Adrenal gland (tissue), 19 donors: ENCODE measurements at regions of chr5 and their contacts with region 1.

Region 1: DNA sequence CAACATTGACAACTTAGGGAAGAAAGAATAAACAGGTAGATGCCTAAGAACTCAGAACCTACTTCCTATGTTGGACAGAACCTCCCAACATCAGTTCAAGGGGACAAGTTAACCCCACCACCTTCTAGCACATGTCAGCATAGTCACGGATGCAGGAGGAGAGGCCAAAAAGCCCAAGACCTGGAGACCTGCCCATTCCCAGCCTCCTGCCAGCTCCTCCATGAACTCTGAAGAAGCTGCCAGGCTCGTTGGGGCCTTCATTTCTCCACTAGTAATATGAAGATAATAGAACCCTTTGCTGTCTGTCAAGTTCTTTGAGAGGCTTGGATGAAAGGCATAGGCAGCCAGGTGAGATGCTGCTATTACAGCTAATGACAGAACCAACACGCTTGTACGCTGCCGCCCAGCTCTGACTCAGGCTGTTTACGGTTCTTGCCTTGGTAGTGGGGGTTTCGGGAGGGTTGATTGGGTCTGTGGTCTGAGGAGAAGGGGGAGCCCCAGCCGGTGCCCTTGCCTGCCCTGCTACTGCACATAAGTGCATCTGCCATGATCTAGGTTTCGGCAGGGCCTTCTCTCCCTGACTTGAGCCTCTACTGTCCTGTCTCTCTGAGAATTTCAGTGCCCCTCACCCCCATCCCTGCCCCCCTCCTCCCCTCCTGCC is 82.2 kb downstream of the NRG2 start:
- DNase-seq: peak in 1 of 7 donors; percentile 41
- H3K4me3 ChIP-seq: no peak overlapping the region
- H3K27ac ChIP-seq: no peak overlapping the region
- H3K4me1 ChIP-seq: no peaks in the 10 kb centered on the region
- H3K27me3 ChIP-seq: no peaks in the 10 kb centered on the region
- CTCF ChIP-seq: no peak
- POLR2A ChIP-seq: no peak

Region 2: DNA sequence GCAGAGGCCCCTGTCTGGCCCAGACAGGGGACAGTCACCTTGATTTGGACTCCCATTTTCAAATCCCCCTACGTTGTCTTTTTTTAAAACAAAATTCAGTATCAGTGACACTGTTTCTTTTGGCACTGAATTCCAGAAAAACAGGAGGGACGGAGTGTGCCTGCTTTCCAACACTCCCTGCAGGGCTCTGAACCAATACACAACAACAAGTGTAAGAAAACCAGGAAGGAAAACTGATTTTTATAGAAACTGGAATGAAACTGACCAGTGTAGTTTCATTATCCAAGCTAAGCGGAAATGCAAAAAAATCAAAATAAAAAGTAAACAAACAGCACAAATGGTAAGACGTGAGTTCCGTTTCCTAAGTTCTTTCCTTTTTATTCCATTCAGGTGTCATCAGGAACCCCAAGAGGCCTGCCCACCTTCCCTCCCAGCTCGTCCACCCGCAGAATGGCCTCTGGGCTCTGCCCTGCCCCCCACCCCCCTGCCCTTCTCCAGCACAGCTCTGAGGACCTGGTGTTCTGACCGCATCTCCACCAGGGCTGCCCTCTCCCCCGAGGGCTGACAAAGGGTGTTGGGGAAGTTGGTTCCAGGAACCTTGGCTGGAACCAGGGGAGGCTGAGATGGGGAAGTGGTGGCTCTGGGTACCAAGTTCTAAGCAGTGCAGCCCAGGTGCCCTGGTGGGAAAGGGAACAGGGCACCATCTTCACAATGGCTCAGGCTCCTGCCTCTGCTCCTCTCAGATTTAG is 91.6 kb before region 1 on chr5:
- intact Hi-C with region 1: loop called in 1 of 2 experiments (anchors 5 kb)
- DNase-seq: no peak
- H3K4me3 ChIP-seq: peak overlapping the region in 1 of 4 donors; percentile 32
- H3K27ac ChIP-seq: peak overlapping the region in 1 of 5 donors; percentile 16
- H3K4me1 ChIP-seq: peaks cover 0 to 6% of the 10 kb centered on the region in 2 donors
- H3K27me3 ChIP-seq: no peaks in the 10 kb centered on the region
- CTCF ChIP-seq: no peak
- POLR2A ChIP-seq: no peak

Region 3: GRCh38 chr5:140038373-140038957 is 77.6 kb after region 1 on chr5:
- intact Hi-C with region 1: no loop called
- DNase-seq: no peak
- H3K4me3 ChIP-seq: peak overlapping the region in 2 of 4 donors; percentile 23 to 53
- H3K27ac ChIP-seq: peak overlapping the region in 4 of 5 donors; percentile 43 to 85 (median 82)
- H3K4me1 ChIP-seq: peaks cover 28 to 40% of the 10 kb centered on the region in 2 donors
- H3K27me3 ChIP-seq: no peaks in the 10 kb centered on the region
- CTCF ChIP-seq: no peak
- POLR2A ChIP-seq: no peak